Mucosa of descending colon (tissue), 3 donors: ENCODE measurements at regions of chr10 and their contacts with region 1.

Region 1: GRCh38 chr10:70920565-70920964 is 32.2 kb upstream of the PCBD1 start:
- DNase-seq: peak; percentile 75 to 83 (median 76)
- ATAC-seq: peak; percentile 86
- H3K4me3 ChIP-seq: no peak overlapping the region
- H3K4me1 ChIP-seq: no peaks in the 10 kb centered on the region
- CTCF ChIP-seq: no peak

Region 2: DNA sequence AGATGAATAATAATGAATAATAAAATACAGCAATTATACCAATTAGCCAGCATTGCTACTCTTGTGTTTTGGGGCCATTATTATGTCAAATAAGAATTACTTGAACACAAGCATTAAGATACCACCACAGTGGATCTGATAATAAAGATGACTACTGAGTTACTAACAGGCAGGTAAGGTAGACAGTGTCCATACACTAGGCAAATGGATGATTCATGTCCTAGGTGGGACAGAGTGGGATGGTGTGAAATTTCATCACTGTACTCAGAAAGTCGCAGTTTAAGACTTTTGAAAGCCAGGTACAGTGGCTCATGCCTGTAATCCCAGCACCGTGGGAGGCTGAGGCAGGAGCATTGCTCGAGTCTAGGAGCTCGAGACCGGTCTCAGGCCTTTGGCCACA is 283.2 kb after region 1 on chr10:
- intact Hi-C with region 1: loop called in 1 of 2 experiments (anchors 5 kb)
- DNase-seq: no peak
- ATAC-seq: no peak
- H3K4me3 ChIP-seq: no peak overlapping the region
- H3K4me1 ChIP-seq: no peaks in the 10 kb centered on the region
- CTCF ChIP-seq: no peak